CD8-positive, alpha-beta T cell (primary cell): ENCODE measurements at regions of chr7 and their contacts with region 1.

Region 1: GRCh38 chr7:149742075-149742701 is 31.2 kb downstream of the ZNF467 start:
- DNase-seq: peak; percentile 25 to 77 (median 64)
- ATAC-seq: peak; percentile 71
- H3K4me3 ChIP-seq: peak overlapping the region; percentile 18 to 33
- H3K4me3 Mint-ChIP-seq: peak overlapping the region; percentile 75
- H3K27ac ChIP-seq: no peak overlapping the region
- H3K27ac Mint-ChIP-seq: no peak overlapping the region
- H3K4me1 ChIP-seq: peaks cover 11% of the 10 kb centered on the region
- H3K4me1 Mint-ChIP-seq: peaks cover 11% of the 10 kb centered on the region
- H3K27me3 ChIP-seq: peaks cover 10 to 12% of the 10 kb centered on the region in 2 experiments
- H3K27me3 Mint-ChIP-seq: peaks cover 34% of the 10 kb centered on the region
- CTCF ChIP-seq: peak; percentile 90

Region 2: GRCh38 chr7:149662591-149663095 is 79.5 kb before region 1 on chr7:
- CTCF ChIA-PET with region 1: interaction called, 31 read pairs
- POLR2A ChIA-PET with region 1: interaction called, 3 read pairs
- intact Hi-C with region 1: no loop called
- DNase-seq: peak; percentile 31 to 70 (median 59)
- ATAC-seq: peak; percentile 56
- H3K4me3 ChIP-seq: no peak overlapping the region
- H3K4me3 Mint-ChIP-seq: no peak overlapping the region
- H3K27ac ChIP-seq: no peak overlapping the region
- H3K27ac Mint-ChIP-seq: no peak overlapping the region
- H3K4me1 ChIP-seq: no peaks in the 10 kb centered on the region
- H3K4me1 Mint-ChIP-seq: no peaks in the 10 kb centered on the region
- H3K27me3 ChIP-seq: peaks cover 0 to 3% of the 10 kb centered on the region in 2 experiments
- H3K27me3 Mint-ChIP-seq: peaks cover 34% of the 10 kb centered on the region
- CTCF ChIP-seq: no peak

Region 3: DNA sequence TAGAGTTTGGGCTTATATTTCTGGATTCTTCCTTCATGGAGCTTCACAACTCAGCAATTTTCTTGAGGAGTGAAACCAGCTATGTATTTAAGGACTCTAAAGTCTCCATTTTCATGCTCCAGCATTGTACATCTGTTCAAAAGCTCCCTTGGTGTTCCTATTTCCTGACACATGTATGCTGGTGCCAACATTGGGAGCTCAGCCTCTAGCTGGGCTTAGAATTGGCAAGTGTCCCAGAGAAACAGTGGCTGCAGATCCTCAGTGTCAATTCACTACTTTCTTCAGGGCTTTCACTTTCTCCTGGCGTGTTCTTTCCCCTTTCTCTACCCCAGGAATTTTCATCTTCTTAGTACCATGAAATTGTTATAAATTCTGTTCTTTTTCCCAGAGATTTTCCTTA is 71.9 kb before region 1 on chr7:
- CTCF ChIA-PET with region 1: interaction called, 14 read pairs
- POLR2A ChIA-PET with region 1: no interaction called
- intact Hi-C with region 1: loop called in 1 of 2 experiments (anchors 2 kb)
- DNase-seq: no peak
- ATAC-seq: no peak
- H3K4me3 ChIP-seq: no peak overlapping the region
- H3K4me3 Mint-ChIP-seq: no peak overlapping the region
- H3K27ac ChIP-seq: no peak overlapping the region
- H3K27ac Mint-ChIP-seq: no peak overlapping the region
- H3K4me1 ChIP-seq: no peaks in the 10 kb centered on the region
- H3K4me1 Mint-ChIP-seq: no peaks in the 10 kb centered on the region
- H3K27me3 ChIP-seq: peaks cover 2 to 6% of the 10 kb centered on the region in 2 experiments
- H3K27me3 Mint-ChIP-seq: peaks cover 35% of the 10 kb centered on the region
- CTCF ChIP-seq: no peak

Region 4: GRCh38 chr7:149727899-149728476 is 14.2 kb before region 1 on chr7:
- CTCF ChIA-PET with region 1: interaction called, 10 read pairs
- POLR2A ChIA-PET with region 1: no interaction called
- intact Hi-C with region 1: no loop called
- DNase-seq: no peak
- ATAC-seq: no peak
- H3K4me3 ChIP-seq: no peak overlapping the region
- H3K4me3 Mint-ChIP-seq: no peak overlapping the region
- H3K27ac ChIP-seq: no peak overlapping the region
- H3K27ac Mint-ChIP-seq: no peak overlapping the region
- H3K4me1 ChIP-seq: no peaks in the 10 kb centered on the region
- H3K4me1 Mint-ChIP-seq: no peaks in the 10 kb centered on the region
- H3K27me3 ChIP-seq: no peaks in the 10 kb centered on the region
- H3K27me3 Mint-ChIP-seq: no peaks in the 10 kb centered on the region
- CTCF ChIP-seq: no peak

Region 5: DNA sequence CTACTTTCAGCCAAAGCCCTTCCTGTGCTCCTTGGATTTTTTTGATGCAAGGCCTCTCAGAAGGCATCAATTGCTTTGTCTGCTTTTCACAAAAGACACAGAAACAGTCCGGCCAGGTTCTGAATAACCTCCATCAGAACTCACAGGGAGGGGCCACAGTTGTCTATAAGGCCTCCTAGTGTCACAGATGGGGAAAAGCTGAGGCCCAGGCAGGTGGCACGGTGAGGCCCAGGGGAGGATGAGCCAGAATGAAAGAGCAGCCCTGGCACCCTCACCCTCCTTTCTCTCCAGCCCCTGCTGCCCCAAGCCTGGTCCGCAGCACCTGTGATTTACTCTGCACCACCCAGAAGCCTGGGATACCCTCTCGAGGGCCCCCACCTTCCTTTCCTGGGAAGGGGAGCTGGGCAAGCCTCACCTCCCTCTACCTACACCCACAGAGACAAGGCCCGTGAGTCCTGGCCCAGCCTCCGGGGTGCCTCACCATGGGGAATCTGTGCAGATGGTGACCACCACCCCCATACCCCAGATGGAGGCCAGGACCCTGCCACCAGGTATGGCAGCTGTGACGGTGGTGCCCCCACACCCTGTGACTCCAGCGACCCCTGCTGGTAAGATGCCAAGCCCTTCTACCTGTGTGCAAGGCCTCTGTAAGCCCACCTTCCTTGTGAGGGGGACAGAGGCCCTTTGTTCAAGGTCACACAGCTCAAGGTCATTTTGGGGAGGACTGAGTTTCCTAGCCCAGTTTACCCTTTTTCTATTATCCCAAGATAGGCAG is 57.4 kb after region 1 on chr7:
- CTCF ChIA-PET with region 1: interaction called, 4 read pairs
- POLR2A ChIA-PET with region 1: no interaction called
- intact Hi-C with region 1: loop called in 1 of 2 experiments (anchors 10 kb)
- DNase-seq: peak; percentile 36 to 77 (median 70)
- ATAC-seq: peak; percentile 85
- H3K4me3 ChIP-seq: no peak overlapping the region
- H3K4me3 Mint-ChIP-seq: no peak overlapping the region
- H3K27ac ChIP-seq: no peak overlapping the region
- H3K27ac Mint-ChIP-seq: no peak overlapping the region
- H3K4me1 ChIP-seq: no peaks in the 10 kb centered on the region
- H3K4me1 Mint-ChIP-seq: no peaks in the 10 kb centered on the region
- H3K27me3 ChIP-seq: no peaks in the 10 kb centered on the region
- H3K27me3 Mint-ChIP-seq: no peaks in the 10 kb centered on the region
- CTCF ChIP-seq: peak; percentile 57

Region 6: GRCh38 chr7:150481186-150481920 is 739.2 kb after region 1 on chr7:
- CTCF ChIA-PET with region 1: no interaction called
- POLR2A ChIA-PET with region 1: no interaction called
- intact Hi-C with region 1: no loop called
- DNase-seq: peak; percentile 27 to 84 (median 65)
- ATAC-seq: peak; percentile 63
- H3K4me3 ChIP-seq: peak overlapping the region; percentile 1 to 14
- H3K4me3 Mint-ChIP-seq: peak overlapping the region; percentile 81
- H3K27ac ChIP-seq: peak overlapping the region; percentile 55 to 91
- H3K27ac Mint-ChIP-seq: peak overlapping the region; percentile 100
- H3K4me1 ChIP-seq: peaks cover 89% of the 10 kb centered on the region
- H3K4me1 Mint-ChIP-seq: peaks cover 91% of the 10 kb centered on the region
- H3K27me3 ChIP-seq: no peaks in the 10 kb centered on the region
- H3K27me3 Mint-ChIP-seq: no peaks in the 10 kb centered on the region
- CTCF ChIP-seq: no peak